Activated CD4-positive, alpha-beta memory T cell treated with anti-CD3 and anti-CD28 coated beads for 36 hours (primary cell): ENCODE measurements at regions of chr7 and their contacts with region 1.

Region 1: DNA sequence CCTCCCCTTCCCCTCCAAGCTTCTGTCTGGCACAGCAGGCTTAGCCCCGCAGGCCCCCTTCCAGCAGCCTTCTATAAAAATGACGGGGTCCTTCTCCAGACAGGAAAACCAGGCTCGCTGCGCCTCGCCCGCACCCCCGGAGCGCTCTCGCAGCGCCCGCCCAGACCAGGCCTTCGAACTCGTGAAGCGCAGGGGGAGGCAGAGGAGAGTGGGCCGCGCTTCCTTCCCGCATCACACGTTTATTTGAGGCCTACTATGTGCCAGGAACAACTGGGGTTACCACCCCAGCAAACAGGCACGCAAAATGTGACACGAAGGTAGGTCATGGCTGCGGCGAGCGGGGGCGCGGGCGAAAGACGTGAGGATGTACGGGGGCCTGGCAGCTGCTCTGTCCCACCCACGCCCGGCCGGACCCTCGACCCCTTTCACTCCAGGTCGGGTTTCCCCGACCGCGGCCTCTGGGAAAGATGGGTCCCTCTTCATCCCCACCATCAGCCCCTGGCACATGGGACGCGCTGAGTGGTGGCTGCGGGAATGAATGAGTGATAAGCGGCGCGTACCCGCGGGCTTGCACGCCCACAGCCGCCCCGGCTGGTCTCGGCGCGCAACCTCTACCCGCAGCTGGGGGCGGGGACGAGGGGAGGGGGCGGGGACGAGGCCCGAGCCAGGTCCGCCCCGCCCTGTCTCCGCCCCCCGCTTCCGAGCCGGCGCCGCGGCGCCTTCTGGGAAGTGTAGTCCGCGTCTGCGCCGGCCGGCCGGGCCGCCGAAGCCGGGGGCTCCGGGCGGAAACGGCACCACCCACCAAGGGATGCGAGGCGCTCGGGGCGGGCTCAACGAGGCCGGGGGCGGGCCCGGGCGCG is 59.1 kb downstream of the ZNF467 start:
- DNase-seq: peak; percentile 94
- H3K4me3 Mint-ChIP-seq: peak overlapping the region; percentile 74
- H3K27ac Mint-ChIP-seq: peak overlapping the region; percentile 38
- H3K4me1 Mint-ChIP-seq: peaks cover 17% of the 10 kb centered on the region
- H3K27me3 Mint-ChIP-seq: no peaks in the 10 kb centered on the region

Region 2: DNA sequence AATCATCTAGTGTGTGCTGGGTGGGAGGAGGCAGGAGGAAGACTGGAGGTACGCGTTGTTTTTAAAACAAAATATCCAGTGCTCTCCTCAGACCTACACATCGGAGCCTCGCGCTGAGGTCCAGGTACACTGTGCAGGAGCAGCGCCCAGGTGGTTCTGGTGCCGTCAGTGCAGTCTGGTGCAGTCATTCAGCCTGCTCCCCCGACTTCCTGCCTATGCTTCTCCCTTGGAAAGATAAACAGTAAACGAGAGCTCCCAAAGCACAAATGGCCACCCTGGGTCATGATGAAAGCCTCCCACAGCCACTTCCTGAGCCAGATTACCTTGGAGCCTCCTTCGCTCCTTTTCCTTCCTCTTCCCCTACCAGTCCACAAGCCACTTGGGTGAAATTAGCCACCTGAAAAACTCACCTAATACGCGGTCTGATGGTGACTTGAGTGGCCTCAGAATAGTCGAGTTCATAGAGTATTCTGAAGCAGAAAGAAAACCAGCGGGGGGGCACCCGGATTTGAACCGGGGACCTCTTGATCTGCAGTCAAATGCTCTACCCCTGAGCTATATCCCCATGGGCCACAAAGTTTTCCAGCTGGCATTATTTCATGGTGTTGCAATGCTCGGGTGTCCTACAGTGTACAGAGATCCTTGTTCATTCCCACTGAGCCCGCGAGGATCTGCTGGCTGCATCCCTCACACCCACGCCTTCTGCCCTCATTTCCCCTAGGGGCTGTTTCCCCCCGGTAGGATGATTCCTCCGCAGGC is 23.4 kb before region 1 on chr7:
- CTCF ChIA-PET with region 1: no interaction called
- POLR2A ChIA-PET with region 1: no interaction called
- intact Hi-C with region 1: no loop called
- DNase-seq: peak; percentile 27
- H3K4me3 Mint-ChIP-seq: no peak overlapping the region
- H3K27ac Mint-ChIP-seq: no peak overlapping the region
- H3K4me1 Mint-ChIP-seq: no peaks in the 10 kb centered on the region
- H3K27me3 Mint-ChIP-seq: peaks cover 41% of the 10 kb centered on the region

Region 3: GRCh38 chr7:149742075-149742701 is 27.9 kb after region 1 on chr7:
- CTCF ChIA-PET with region 1: interaction called, 6 read pairs
- POLR2A ChIA-PET with region 1: no interaction called
- intact Hi-C with region 1: loop called (anchors 1 kb)
- DNase-seq: peak; percentile 69
- H3K4me3 Mint-ChIP-seq: peak overlapping the region; percentile 58
- H3K27ac Mint-ChIP-seq: no peak overlapping the region
- H3K4me1 Mint-ChIP-seq: peaks cover 11% of the 10 kb centered on the region
- H3K27me3 Mint-ChIP-seq: peaks cover 22% of the 10 kb centered on the region

Region 4: DNA sequence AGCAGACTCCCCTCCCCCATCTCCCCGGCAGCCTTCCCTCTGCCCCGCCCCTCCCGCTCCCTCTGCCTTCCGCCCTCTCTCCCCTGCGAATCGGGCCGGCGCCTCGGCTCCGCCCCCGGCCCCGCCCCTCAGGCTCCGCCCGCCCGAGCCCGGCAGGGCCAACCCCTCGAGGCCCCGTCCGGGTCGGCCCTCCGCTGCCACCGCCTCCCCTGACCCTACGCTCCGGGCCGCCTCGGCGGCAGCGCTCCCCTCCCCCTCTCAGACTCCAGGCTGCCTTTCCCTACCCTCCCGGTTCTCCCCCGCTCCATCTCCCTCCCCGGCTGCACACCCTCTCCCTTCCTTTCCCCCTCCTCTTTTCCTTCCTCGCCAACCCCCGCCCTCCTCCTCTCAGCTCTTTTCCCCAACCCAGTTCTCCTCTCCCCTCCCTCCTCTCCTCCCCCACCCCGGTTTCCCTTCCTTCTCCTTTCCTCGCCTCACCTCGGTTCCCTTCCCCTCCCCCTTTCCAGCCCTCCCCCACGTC is 57.5 kb after region 1 on chr7:
- CTCF ChIA-PET with region 1: no interaction called
- POLR2A ChIA-PET with region 1: no interaction called
- intact Hi-C with region 1: loop called (anchors 2 kb)
- DNase-seq: peak; percentile 92
- H3K4me3 Mint-ChIP-seq: peak overlapping the region; percentile 69
- H3K27ac Mint-ChIP-seq: no peak overlapping the region
- H3K4me1 Mint-ChIP-seq: peaks cover 1% of the 10 kb centered on the region
- H3K27me3 Mint-ChIP-seq: peaks cover 2% of the 10 kb centered on the region

Region 5: GRCh38 chr7:149790146-149790548 is 75.9 kb after region 1 on chr7:
- CTCF ChIA-PET with region 1: no interaction called
- POLR2A ChIA-PET with region 1: no interaction called
- intact Hi-C with region 1: no loop called
- DNase-seq: peak; percentile 60
- H3K4me3 Mint-ChIP-seq: no peak overlapping the region
- H3K27ac Mint-ChIP-seq: no peak overlapping the region
- H3K4me1 Mint-ChIP-seq: peaks cover 3% of the 10 kb centered on the region
- H3K27me3 Mint-ChIP-seq: peaks cover 22% of the 10 kb centered on the region

Region 6: GRCh38 chr7:149838224-149838947 is 124.1 kb after region 1 on chr7 and contains the start of gene ZNF862:
- CTCF ChIA-PET with region 1: no interaction called
- POLR2A ChIA-PET with region 1: no interaction called
- intact Hi-C with region 1: loop called (anchors 1 kb)
- DNase-seq: peak; percentile 97
- H3K4me3 Mint-ChIP-seq: peak within 1 kb of the TSS; percentile 80
- H3K27ac Mint-ChIP-seq: peak within 1 kb of the TSS; percentile 65
- H3K4me1 Mint-ChIP-seq: peaks cover 28% of the 10 kb centered on the region
- H3K27me3 Mint-ChIP-seq: no peaks in the 10 kb centered on the region
- total RNA-seq, gene ZNF862: 18.1 to 21.4 TPM

Region 7: DNA sequence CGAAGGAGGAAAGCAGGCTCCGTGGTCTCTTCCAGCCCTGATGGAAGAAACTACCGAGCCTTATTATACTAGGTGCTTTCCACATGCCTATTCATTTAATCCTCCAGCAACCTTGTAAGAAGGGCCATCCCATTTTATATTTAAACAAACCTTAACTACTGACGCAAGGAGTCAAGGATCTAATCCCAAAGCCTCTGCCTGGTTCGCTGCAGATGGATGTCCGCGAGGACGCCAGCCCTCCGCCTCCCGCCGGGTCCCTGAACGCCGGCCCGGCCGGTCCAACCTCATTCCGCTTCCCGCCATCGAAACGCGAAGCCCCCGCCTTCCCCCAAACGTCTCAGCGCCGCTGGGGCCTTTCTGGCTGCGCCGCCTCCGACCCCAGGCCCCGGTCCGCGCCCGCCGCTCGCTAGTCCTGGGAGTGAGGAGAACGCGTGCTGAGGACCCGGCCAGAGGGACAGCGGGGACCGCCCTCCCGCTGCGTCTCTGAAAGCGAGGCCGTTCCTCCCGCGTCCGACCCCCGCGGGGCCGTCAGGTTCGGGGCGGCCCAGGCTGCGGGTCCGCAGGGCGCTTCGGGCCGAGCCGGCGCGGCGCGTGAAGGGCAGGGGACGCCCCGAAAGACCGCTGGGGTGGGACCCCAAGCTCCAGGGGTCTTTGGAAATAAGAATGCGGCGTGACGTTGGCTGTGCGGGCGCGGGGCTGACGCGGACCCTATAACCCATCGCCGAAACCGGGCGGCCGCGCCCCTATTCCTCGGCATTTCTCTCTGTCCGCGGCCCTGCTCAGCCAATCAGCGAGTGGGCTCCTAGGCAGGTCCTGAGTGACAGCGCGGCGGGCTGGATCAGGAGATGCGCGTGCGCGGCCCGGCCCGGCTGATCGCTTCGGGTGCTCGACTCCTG is 159.0 kb after region 1 on chr7 and contains the start of gene ATP6V0E2:
- CTCF ChIA-PET with region 1: no interaction called
- POLR2A ChIA-PET with region 1: no interaction called
- intact Hi-C with region 1: loop called (anchors 1 kb)
- DNase-seq: peak; percentile 96
- H3K4me3 Mint-ChIP-seq: peak within 1 kb of the TSS; percentile 86
- H3K27ac Mint-ChIP-seq: peak within 1 kb of the TSS; percentile 86
- H3K4me1 Mint-ChIP-seq: peaks cover 69% of the 10 kb centered on the region
- H3K27me3 Mint-ChIP-seq: no peaks in the 10 kb centered on the region
- total RNA-seq, gene ATP6V0E2: 33.5 to 34.1 TPM